ENCODE measurements at regions of chr5 and their contacts with region 1.

Region 1: DNA sequence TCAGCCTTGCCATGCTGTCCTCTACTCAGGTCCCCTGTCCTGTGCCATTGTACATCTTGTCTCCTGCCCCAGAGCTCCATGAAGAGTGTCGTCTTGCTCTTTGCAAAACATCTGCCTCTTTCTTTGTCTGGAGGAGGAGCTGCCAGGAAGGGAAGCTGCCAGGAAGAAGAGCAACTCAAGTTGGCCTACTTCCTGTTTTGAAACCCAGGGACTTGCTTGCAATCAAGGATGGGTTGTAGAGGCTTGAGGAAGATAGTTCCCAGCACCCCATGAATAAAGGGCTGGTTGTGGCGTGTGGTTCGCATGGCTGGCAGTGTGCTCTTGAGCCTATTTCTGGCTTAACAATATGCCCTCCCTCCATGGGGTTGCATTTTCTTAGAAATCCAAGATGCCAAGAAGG is 53.0 kb upstream of the CPEB4 start:
- DNase-seq: peak; percentile 45
- ATAC-seq: peak; percentile 48

Region 2: GRCh38 chr5:173789031-173789920 is 45.9 kb before region 1 on chr5:
- intact Hi-C with region 1: loop called (anchors 5 kb)
- DNase-seq: no peak
- ATAC-seq: no peak

Region 3: DNA sequence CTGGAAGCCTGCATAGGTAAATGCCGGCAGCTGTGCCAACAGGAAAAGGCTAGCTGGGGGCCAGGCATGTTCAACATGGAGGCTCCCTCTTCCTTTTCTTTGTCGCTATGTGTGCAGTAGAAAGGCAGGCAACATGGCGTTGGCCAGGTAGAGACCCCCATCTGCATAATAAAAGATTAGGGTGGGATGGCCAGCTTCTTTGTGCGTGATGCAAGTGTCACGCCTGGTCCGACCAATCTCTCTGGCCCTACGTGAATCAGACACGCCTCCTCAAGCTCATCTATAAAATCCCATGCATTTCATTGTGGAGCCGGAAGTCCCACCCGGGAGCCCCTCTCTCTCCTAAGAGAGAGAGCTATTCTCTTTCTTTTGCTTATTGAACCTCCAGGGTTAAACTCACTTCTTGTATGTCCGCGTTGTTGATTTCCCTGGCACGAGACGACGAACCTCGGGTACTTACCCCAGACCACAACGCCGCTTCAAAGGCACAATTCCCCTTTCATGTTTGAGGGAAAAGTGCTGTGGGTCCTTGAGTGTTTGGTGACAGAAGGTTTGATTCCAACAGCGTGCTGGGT is 128.8 kb after region 1 on chr5:
- intact Hi-C with region 1: no loop called
- DNase-seq: no peak
- ATAC-seq: peak; percentile 21